ENCODE measurements at regions of chr4 and their contacts with region 1.

Region 1: DNA sequence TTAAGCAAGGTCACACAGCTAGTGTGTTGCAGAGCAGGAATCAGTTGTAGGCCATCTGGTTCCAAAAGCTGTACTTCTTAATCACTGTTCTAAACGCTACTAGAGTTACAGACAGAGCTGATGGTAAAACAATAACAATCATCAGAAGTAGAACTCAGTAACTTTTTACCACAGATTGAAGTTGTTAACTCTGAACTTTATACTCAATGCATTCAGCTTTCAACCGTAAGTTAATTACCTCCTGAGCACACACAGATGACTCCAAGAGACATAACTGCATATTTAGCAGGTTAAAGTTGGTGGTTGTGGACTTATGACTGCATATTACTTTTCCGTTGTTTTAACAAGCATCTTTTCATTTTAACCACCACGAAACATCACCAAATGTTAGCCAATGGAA is 127.3 kb downstream of the PRSS12 start:
- DNase-seq: no peak
- ATAC-seq: no peak
- H3K4me3 ChIP-seq: no peak overlapping the region
- H3K4me3 Mint-ChIP-seq: no peak overlapping the region
- H3K27ac ChIP-seq: no peak overlapping the region
- H3K27ac Mint-ChIP-seq: no peak overlapping the region
- H3K4me1 ChIP-seq: no peaks in the 10 kb centered on the region
- H3K4me1 Mint-ChIP-seq: no peaks in the 10 kb centered on the region
- H3K27me3 ChIP-seq: no peaks in the 10 kb centered on the region
- H3K27me3 Mint-ChIP-seq: peaks cover 8% of the 10 kb centered on the region
- CTCF ChIP-seq: no peak

Region 2: DNA sequence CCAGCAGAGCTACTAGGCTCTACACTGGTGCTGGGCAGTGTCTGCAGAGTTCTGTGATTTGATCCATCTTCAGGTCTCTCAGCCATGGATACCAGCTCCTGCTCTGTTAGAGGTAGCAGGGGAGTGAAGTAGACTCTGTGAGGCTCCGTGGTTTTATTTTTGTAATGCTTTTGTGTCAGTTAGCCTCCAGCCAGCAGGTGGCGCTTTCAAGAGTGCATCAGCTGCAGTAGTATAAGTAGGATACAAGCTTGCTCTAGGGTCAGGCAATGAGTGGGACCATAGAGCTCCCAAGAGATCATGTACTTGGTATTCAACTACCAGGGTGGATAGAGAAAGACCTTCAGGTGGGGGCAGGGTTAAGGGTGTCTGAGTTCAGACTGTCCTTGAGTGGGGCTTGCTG is 777.6 kb before region 1 on chr4:
- CTCF ChIA-PET with region 1: no interaction called
- POLR2A ChIA-PET with region 1: no interaction called
- intact Hi-C with region 1: loop called in 1 of 2 experiments (anchors 5 kb)
- DNase-seq: peak in 4 of 14 experiments; percentile 6 to 28 (median 10)
- ATAC-seq: no peak
- H3K4me3 ChIP-seq: no peak overlapping the region
- H3K4me3 Mint-ChIP-seq: no peak overlapping the region
- H3K27ac ChIP-seq: no peak overlapping the region
- H3K27ac Mint-ChIP-seq: no peak overlapping the region
- H3K4me1 ChIP-seq: no peaks in the 10 kb centered on the region
- H3K4me1 Mint-ChIP-seq: no peaks in the 10 kb centered on the region
- H3K27me3 ChIP-seq: no peaks in the 10 kb centered on the region
- H3K27me3 Mint-ChIP-seq: no peaks in the 10 kb centered on the region
- CTCF ChIP-seq: no peak